ENCODE measurements at regions of chr2 and their contacts with region 1.

Region 1: GRCh38 chr2:223957092-223957851 is at the start of gene MRPL44:
- DNase-seq: peak; percentile 98
- ATAC-seq: peak; percentile 97
- H3K4me3 Mint-ChIP-seq: peak within 1 kb of the TSS; percentile 94
- H3K27ac Mint-ChIP-seq: peak within 1 kb of the TSS; percentile 92
- H3K4me1 Mint-ChIP-seq: peaks cover 74% of the 10 kb centered on the region
- H3K27me3 Mint-ChIP-seq: no peaks in the 10 kb centered on the region
- total RNA-seq, gene MRPL44: 37.5 to 39.7 TPM

Region 2: DNA sequence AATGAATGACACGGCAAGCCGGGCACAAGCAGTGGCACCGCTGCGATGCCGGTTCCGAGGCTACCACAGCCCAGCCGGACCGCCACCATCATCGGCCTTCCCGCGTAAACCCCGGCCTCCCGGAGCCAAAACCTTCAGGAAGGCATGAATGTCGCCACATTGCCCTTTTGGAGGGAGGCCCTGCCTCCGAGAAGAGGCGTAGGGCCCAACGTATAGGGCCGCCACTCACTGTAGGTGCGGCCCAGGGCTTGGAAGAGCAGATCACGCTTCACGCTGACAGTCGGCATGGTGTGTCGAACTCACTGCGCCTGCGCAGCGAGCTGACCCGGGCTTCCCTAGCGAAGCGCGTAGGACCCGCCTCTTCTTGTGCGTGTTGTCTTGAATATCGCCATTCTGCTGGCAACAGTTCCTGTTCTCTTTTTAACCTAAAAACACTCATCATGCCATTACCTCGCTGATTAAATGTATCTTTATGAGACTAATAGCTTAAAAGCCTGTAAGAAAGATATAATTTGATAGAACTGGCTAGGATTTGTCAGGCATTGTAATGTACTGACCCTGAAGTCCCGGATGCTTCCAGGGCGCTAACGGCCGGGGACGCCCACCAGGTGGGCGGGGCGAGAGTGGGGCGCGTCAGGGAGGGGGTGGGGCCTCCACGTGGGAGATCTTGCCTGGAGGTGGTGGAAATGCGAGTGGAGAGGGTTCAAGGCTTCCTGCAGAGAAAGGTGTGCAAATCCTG is 1301.3 kb before region 1 on chr2 and contains the start of gene FARSB:
- CTCF ChIA-PET with region 1: no interaction called
- POLR2A ChIA-PET with region 1: no interaction called
- intact Hi-C with region 1: loop called in 1 of 2 experiments (anchors 2 kb)
- DNase-seq: peak; percentile 96
- ATAC-seq: peak; percentile 92
- H3K4me3 Mint-ChIP-seq: peak within 1 kb of the TSS; percentile 97
- H3K27ac Mint-ChIP-seq: peak within 1 kb of the TSS; percentile 95
- H3K4me1 Mint-ChIP-seq: peaks cover 38% of the 10 kb centered on the region
- H3K27me3 Mint-ChIP-seq: no peaks in the 10 kb centered on the region
- total RNA-seq, gene FARSB: 56.3 to 58.5 TPM

Region 3: GRCh38 chr2:223779877-223780276 is 177.4 kb before region 1 on chr2:
- CTCF ChIA-PET with region 1: no interaction called
- POLR2A ChIA-PET with region 1: no interaction called
- intact Hi-C with region 1: loop called in 1 of 2 experiments (anchors 1 kb)
- DNase-seq: peak; percentile 71
- ATAC-seq: peak; percentile 72
- H3K4me3 Mint-ChIP-seq: no peak overlapping the region
- H3K27ac Mint-ChIP-seq: no peak overlapping the region
- H3K4me1 Mint-ChIP-seq: no peaks in the 10 kb centered on the region
- H3K27me3 Mint-ChIP-seq: no peaks in the 10 kb centered on the region

Region 4: DNA sequence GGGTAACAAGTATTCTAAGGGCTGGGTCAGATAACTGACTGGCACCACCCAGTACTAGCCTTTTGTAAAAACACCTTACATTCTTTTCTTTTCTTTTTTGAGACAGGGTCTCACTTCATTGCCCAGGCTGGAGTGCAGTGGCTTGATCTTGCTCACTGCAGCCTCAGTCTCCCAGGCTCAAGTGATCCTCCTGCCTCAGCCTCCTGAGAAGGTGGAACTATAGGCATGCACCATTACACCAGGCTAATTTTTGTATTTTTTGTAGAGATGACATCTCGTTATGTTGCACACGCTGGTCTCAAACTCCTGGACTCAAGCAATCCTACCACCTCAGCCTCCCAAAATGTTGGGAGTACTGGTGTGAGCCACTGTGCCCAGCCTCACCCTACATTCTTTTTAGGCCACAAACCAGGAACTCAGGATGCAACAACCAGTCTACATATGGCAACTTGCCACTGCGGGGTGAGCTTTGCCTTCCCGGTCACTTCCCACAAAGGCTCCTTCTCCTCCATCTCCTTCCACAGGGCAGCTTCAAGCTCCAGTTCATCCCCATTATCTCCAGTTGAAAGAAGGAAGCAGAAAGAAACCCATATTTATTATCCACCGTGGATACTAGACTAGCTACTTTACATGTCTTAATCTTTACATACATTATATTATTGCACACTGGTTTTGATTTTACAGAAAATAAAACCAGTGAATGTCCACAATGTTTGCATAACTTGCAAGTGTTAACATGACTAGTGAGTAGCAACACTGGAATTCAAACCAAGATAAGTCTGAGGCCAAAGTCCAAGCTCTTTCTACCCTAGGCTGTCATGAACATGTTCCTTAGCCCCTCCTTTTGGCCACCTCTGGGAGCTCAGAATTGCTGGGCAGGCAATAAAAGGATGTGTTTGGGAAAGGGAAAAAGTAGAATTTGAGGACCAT is 96.2 kb before region 1 on chr2:
- CTCF ChIA-PET with region 1: no interaction called
- POLR2A ChIA-PET with region 1: no interaction called
- intact Hi-C with region 1: no loop called
- DNase-seq: no peak
- ATAC-seq: no peak
- H3K4me3 Mint-ChIP-seq: no peak overlapping the region
- H3K27ac Mint-ChIP-seq: no peak overlapping the region
- H3K4me1 Mint-ChIP-seq: peaks cover 15% of the 10 kb centered on the region
- H3K27me3 Mint-ChIP-seq: no peaks in the 10 kb centered on the region

Region 5: GRCh38 chr2:223896833-223897311 is 60.4 kb before region 1 on chr2:
- CTCF ChIA-PET with region 1: no interaction called
- POLR2A ChIA-PET with region 1: no interaction called
- intact Hi-C with region 1: loop called in 1 of 2 experiments (anchors 2 kb)
- DNase-seq: peak; percentile 21
- ATAC-seq: no peak
- H3K4me3 Mint-ChIP-seq: no peak overlapping the region
- H3K27ac Mint-ChIP-seq: no peak overlapping the region
- H3K4me1 Mint-ChIP-seq: peaks cover 24% of the 10 kb centered on the region
- H3K27me3 Mint-ChIP-seq: no peaks in the 10 kb centered on the region

Region 6: DNA sequence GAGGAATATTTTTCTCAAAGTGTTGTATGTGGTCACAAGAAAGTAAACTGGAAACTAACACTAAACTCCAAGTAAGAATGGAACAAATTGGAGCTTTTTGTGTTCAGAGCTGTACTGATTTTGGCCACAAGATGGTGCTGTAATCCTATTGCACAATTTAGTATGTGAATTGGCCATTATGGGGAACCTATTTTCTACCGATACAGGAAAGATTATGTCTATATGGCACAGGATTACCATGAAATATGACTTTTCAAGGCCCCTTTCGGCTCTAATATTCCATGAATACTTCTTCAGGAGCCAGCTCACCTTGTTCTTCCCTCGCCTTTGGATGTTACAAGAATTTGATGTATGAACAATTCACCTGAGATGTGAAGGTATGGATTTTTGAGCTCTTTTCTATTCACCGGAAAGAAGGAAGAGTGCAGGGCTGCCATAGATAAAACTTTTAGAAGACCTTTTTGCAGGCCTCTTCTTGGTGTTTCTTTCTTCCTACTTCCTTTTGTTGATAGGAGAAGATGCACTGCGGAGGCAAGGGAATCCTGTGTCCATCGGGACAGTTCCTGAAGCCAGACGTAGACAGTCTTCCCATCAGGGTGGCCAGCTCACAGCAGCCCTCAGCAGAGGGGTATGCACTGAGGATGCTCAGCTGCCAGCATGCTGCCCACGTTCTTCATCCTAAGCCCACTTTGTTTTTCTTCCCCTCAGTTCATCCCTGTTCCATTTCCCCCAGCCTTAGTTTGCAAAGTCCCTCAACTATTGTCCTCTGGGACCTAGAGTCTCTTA is 13.3 kb after region 1 on chr2:
- CTCF ChIA-PET with region 1: interaction called, 52 read pairs
- POLR2A ChIA-PET with region 1: no interaction called
- intact Hi-C with region 1: no loop called
- DNase-seq: peak; percentile 69
- ATAC-seq: peak; percentile 81
- H3K4me3 Mint-ChIP-seq: no peak overlapping the region
- H3K27ac Mint-ChIP-seq: no peak overlapping the region
- H3K4me1 Mint-ChIP-seq: peaks cover 14% of the 10 kb centered on the region
- H3K27me3 Mint-ChIP-seq: no peaks in the 10 kb centered on the region

Region 7: DNA sequence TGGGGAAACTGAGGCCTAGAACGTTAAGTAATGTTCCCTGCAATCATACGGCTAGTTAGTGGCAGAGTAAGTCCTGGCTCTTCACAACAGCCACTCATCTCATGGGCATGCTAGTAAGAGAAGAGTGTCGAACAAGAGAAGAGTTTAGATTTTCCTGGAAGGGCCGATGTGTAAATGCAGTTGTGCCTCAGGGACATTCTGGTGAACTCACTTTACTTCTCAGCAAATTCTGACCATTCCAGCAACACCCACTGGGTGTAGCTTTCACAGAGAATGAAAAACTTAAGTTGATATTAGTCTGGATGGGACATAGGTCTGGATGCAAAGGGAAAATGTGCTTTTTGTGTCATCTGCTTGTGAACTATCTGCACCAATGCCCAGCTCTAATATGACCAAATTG is 23.5 kb after region 1 on chr2:
- CTCF ChIA-PET with region 1: no interaction called
- POLR2A ChIA-PET with region 1: no interaction called
- intact Hi-C with region 1: no loop called
- DNase-seq: no peak
- ATAC-seq: no peak
- H3K4me3 Mint-ChIP-seq: no peak overlapping the region
- H3K27ac Mint-ChIP-seq: no peak overlapping the region
- H3K4me1 Mint-ChIP-seq: no peaks in the 10 kb centered on the region
- H3K27me3 Mint-ChIP-seq: no peaks in the 10 kb centered on the region

Region 8: GRCh38 chr2:224039124-224039940 is 82.1 kb after region 1 on chr2 and contains the start of gene SERPINE2:
- CTCF ChIA-PET with region 1: no interaction called
- POLR2A ChIA-PET with region 1: no interaction called
- intact Hi-C with region 1: loop called in 1 of 2 experiments (anchors 5 kb)
- DNase-seq: peak; percentile 75
- ATAC-seq: peak; percentile 73
- H3K4me3 Mint-ChIP-seq: peak within 1 kb of the TSS; percentile 83
- H3K27ac Mint-ChIP-seq: peak within 1 kb of the TSS; percentile 40
- H3K4me1 Mint-ChIP-seq: peaks cover 15% of the 10 kb centered on the region
- H3K27me3 Mint-ChIP-seq: peaks cover 51% of the 10 kb centered on the region
- total RNA-seq, gene SERPINE2: 30.9 to 46.6 TPM

Region 9: DNA sequence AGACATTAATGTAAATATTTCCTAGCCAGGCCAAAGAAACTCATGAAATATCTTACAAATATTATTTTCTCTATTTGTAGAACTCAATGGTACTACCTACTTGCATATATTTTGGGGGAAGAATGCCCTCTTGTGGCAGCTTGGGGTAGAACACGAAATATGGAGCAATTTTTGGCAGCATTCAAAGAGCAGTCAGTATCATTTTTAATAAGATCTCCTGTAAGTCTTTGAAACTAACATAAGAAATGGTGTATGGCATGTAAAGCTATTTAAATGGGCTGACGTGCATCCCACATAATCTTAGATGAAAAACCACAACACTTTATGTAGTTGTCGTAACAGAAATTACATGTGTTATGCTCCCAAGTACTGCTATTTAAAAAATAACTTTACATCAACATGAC is 821.2 kb after region 1 on chr2:
- CTCF ChIA-PET with region 1: no interaction called
- POLR2A ChIA-PET with region 1: no interaction called
- intact Hi-C with region 1: loop called in 1 of 2 experiments (anchors 10 kb)
- DNase-seq: peak; percentile 72
- ATAC-seq: peak; percentile 79
- H3K4me3 Mint-ChIP-seq: no peak overlapping the region
- H3K27ac Mint-ChIP-seq: peak overlapping the region; percentile 19
- H3K4me1 Mint-ChIP-seq: peaks cover 6% of the 10 kb centered on the region
- H3K27me3 Mint-ChIP-seq: no peaks in the 10 kb centered on the region

Measured in activated CD4-positive, alpha-beta T cell treated with anti-CD3 and anti-CD28 coated beads for 36 hours (primary cell).